ENCODE measurements at regions of chr20 and their contacts with region 1.

Region 1: GRCh38 chr20:24934101-24934661 is 14.9 kb upstream of the CST7 start:
- DNase-seq: no peak
- H3K4me3 Mint-ChIP-seq: no peak overlapping the region
- H3K27ac Mint-ChIP-seq: no peak overlapping the region
- H3K4me1 Mint-ChIP-seq: peaks cover 36% of the 10 kb centered on the region
- H3K27me3 Mint-ChIP-seq: no peaks in the 10 kb centered on the region

Region 2: GRCh38 chr20:24917797-24918578 is 16.2 kb before region 1 on chr20:
- CTCF ChIA-PET with region 1: interaction called, 10 read pairs
- DNase-seq: peak; percentile 66
- H3K4me3 Mint-ChIP-seq: no peak overlapping the region
- H3K27ac Mint-ChIP-seq: no peak overlapping the region
- H3K4me1 Mint-ChIP-seq: peaks cover 7% of the 10 kb centered on the region
- H3K27me3 Mint-ChIP-seq: peaks cover 39% of the 10 kb centered on the region

Region 3: GRCh38 chr20:24948939-24949679 is 14.9 kb after region 1 on chr20 and contains the start of gene CST7:
- CTCF ChIA-PET with region 1: interaction called, 44 read pairs
- DNase-seq: peak; percentile 93
- H3K4me3 Mint-ChIP-seq: peak within 1 kb of the TSS; percentile 79
- H3K27ac Mint-ChIP-seq: peak within 1 kb of the TSS; percentile 95
- H3K4me1 Mint-ChIP-seq: peaks cover 71% of the 10 kb centered on the region
- H3K27me3 Mint-ChIP-seq: no peaks in the 10 kb centered on the region

Region 4: DNA sequence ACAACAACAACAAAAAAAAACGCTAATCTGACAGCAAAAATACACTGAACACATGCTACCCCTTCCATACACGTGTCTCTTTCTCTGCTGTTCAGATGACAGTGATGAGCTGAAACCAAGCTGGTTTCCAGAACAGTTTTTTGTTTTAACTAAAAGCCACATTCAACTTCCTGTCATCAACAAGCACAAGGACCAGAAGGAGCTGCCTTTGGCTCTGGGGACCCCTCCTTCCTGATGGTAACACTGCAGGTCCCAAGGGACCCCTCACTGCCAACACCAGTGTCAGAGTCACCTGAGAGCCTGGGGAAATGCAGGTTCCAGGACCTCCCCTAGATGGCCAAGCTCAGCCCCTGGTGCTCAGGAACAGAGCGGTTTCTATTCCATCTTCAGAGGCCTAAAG is 20.9 kb after region 1 on chr20:
- CTCF ChIA-PET with region 1: interaction called, 44 read pairs
- DNase-seq: peak; percentile 59
- H3K4me3 Mint-ChIP-seq: no peak overlapping the region
- H3K27ac Mint-ChIP-seq: peak overlapping the region; percentile 92
- H3K4me1 Mint-ChIP-seq: peaks cover 56% of the 10 kb centered on the region
- H3K27me3 Mint-ChIP-seq: no peaks in the 10 kb centered on the region

Region 5: DNA sequence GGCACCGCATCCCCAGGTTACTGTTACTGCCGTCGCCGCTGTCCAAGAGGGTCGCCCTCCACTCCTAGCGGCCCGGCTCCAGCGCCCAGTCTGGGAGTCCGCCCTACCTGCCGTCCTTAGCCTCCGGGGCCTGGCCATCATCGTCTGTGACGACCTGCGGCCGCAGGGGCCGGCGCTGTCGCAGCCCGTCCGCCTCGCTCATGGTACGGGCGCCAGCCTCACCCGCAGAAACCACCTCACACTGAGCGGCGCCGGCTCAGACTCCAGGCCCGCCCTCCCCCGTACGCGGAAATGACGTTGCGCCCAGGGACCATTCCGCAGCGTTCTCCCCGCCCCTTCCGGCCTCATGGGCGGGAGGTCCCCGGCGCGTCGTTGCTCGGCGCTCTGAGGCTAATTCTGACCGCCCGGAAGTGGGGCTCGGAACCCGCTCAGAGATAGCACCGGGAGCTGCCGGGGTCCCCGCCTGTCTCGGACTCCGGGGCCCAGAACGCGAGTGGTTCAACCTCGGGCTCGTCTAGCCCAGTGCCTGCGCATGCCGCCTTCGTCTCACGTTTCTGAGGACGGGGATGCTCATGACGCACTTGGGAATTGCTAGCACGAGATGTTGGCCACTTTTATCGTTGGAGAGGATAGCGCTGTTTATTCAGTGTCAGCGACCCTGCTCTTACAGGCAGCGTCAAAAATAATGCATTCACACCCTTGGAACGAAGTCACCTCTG is 58.5 kb after region 1 on chr20 and contains the start of gene APMAP:
- CTCF ChIA-PET with region 1: interaction called, 12 read pairs
- DNase-seq: peak; percentile 97
- H3K4me3 Mint-ChIP-seq: peak within 1 kb of the TSS; percentile 91
- H3K27ac Mint-ChIP-seq: peak within 1 kb of the TSS; percentile 87
- H3K4me1 Mint-ChIP-seq: peaks cover 60% of the 10 kb centered on the region
- H3K27me3 Mint-ChIP-seq: peaks cover 20% of the 10 kb centered on the region

Region 6: GRCh38 chr20:25065625-25066338 is 131.6 kb after region 1 on chr20:
- CTCF ChIA-PET with region 1: interaction called, 23 read pairs
- DNase-seq: peak; percentile 79
- H3K4me3 Mint-ChIP-seq: no peak overlapping the region
- H3K27ac Mint-ChIP-seq: no peak overlapping the region
- H3K4me1 Mint-ChIP-seq: peaks cover 3% of the 10 kb centered on the region
- H3K27me3 Mint-ChIP-seq: peaks cover 64% of the 10 kb centered on the region

Measured in activated naive CD4-positive, alpha-beta T cell treated with anti-CD3 and anti-CD28 coated beads, Interleukin-2, amount 10 ng/mL, durations not matched to agents 7 days and 5 days (primary cell).